ENCODE measurements at regions of chr7 and their contacts with region 1.

Region 1: GRCh38 chr7:92621026-92621540 is 30.9 kb upstream of the FAM133B start:
- DNase-seq: peak; percentile 55 to 91 (median 72)
- ATAC-seq: peak; percentile 92
- H3K4me3 ChIP-seq: no peak overlapping the region
- H3K4me3 Mint-ChIP-seq: peak overlapping the region; percentile 1
- H3K27ac ChIP-seq: peak overlapping the region in 1 of 2 donors; percentile 25
- H3K27ac Mint-ChIP-seq: peak overlapping the region; percentile 18
- H3K4me1 ChIP-seq: peaks cover 8% of the 10 kb centered on the region
- H3K4me1 Mint-ChIP-seq: peaks cover 18% of the 10 kb centered on the region
- H3K27me3 ChIP-seq: no peaks in the 10 kb centered on the region
- H3K27me3 Mint-ChIP-seq: no peaks in the 10 kb centered on the region
- CTCF ChIP-seq: peak; percentile 85

Region 2: GRCh38 chr7:92633211-92633906 is 12.3 kb after region 1 on chr7:
- CTCF ChIA-PET with region 1: interaction called, 13 read pairs
- POLR2A ChIA-PET with region 1: no interaction called
- intact Hi-C with region 1: no loop called
- DNase-seq: peak in 5 of 14 experiments; percentile 7 to 72 (median 66)
- ATAC-seq: peak; percentile 56
- H3K4me3 ChIP-seq: no peak overlapping the region
- H3K4me3 Mint-ChIP-seq: no peak overlapping the region
- H3K27ac ChIP-seq: no peak overlapping the region
- H3K27ac Mint-ChIP-seq: no peak overlapping the region
- H3K4me1 ChIP-seq: no peaks in the 10 kb centered on the region
- H3K4me1 Mint-ChIP-seq: peaks cover 37% of the 10 kb centered on the region
- H3K27me3 ChIP-seq: no peaks in the 10 kb centered on the region
- H3K27me3 Mint-ChIP-seq: no peaks in the 10 kb centered on the region
- CTCF ChIP-seq: no peak

Region 3: DNA sequence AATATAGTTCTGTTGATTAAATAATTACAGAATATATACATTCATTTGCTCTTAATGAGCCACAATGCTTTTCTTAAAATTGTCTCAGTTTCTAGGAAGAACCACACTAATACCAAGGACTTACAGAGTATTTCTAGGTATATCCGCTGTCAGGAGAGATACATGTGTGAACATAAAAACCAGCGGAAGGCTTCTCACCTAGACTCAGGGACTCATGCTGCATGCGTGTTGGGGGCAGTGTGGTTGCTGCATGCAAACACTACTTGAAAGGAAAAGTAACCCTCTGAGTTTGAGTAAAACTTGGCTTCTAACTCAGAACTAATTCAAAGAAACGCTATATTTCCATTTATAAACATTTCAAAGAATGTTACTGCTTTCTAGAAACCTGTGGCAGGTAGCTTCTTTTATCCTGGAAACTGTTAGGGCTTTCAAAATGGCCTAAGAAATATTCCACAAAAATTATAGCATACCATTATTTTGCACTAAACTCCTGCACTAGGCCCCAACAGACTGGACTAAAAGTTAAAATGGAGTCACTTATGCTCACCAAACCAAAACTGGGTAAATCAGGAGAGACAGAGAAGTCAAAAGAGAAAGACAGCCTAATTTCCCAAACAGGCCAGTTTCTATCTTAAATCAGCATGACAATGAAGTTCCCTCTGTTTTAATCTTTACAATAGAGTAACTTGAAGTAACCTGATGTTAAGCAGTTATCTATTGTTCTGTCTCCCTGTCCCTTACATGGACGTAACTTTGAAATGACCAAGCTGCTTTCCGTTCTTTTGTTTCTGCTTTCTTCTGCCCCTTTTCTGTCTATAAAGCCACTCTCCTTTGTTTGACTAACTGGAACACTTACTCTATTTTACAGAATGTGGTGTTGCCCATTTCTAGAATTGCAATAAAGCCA is 64.3 kb after region 1 on chr7:
- CTCF ChIA-PET with region 1: interaction called, 6 read pairs
- POLR2A ChIA-PET with region 1: no interaction called
- intact Hi-C with region 1: loop called (anchors 2 to 5 kb)
- DNase-seq: peak; percentile 6 to 86 (median 25)
- ATAC-seq: peak; percentile 89
- H3K4me3 ChIP-seq: no peak overlapping the region
- H3K4me3 Mint-ChIP-seq: peak overlapping the region; percentile 2
- H3K27ac ChIP-seq: peak overlapping the region; percentile 18 to 24
- H3K27ac Mint-ChIP-seq: peak overlapping the region; percentile 62
- H3K4me1 ChIP-seq: peaks cover 40% of the 10 kb centered on the region
- H3K4me1 Mint-ChIP-seq: peaks cover 61% of the 10 kb centered on the region
- H3K27me3 ChIP-seq: no peaks in the 10 kb centered on the region
- H3K27me3 Mint-ChIP-seq: no peaks in the 10 kb centered on the region
- CTCF ChIP-seq: no peak

Region 4: GRCh38 chr7:92691578-92691977 is 70.5 kb after region 1 on chr7:
- CTCF ChIA-PET with region 1: interaction called, 6 read pairs
- POLR2A ChIA-PET with region 1: no interaction called
- intact Hi-C with region 1: loop called (anchors 2 to 5 kb)
- DNase-seq: peak in 4 of 14 experiments; percentile 26 to 74 (median 68)
- ATAC-seq: peak; percentile 90
- H3K4me3 ChIP-seq: no peak overlapping the region
- H3K4me3 Mint-ChIP-seq: no peak overlapping the region
- H3K27ac ChIP-seq: no peak overlapping the region
- H3K27ac Mint-ChIP-seq: no peak overlapping the region
- H3K4me1 ChIP-seq: no peaks in the 10 kb centered on the region
- H3K4me1 Mint-ChIP-seq: peaks cover 17% of the 10 kb centered on the region
- H3K27me3 ChIP-seq: no peaks in the 10 kb centered on the region
- H3K27me3 Mint-ChIP-seq: no peaks in the 10 kb centered on the region
- CTCF ChIP-seq: peak; percentile 67

Region 5: DNA sequence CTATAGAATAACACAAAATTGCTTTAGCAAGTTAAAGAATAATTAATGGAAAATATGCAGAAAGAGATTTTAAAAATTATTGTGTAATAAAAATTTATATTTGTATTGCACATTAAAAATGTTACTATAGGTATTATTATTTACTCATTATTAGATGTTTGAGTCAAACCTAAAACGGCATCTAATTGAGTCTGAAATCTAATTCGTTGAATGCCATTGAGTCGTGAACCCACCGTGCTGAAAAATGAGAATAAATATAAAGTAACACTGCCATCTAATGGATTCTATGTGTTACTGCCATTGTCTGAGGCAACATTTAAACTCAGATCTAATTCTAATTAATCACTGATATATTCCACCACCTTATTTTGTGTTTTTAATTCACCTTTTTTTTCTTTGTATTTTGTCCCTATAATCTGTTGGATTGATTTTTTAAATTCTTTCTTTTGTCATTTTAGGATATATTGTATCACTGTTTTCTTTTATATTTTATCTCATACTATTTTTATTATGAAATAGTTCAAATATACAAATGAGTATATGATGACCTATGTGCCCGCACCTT is 434.5 kb after region 1 on chr7:
- CTCF ChIA-PET with region 1: interaction called, 5 read pairs
- POLR2A ChIA-PET with region 1: no interaction called
- intact Hi-C with region 1: loop called (anchors 1 kb)
- DNase-seq: peak in 4 of 14 experiments; percentile 7 to 66 (median 62)
- ATAC-seq: peak; percentile 76
- H3K4me3 ChIP-seq: no peak overlapping the region
- H3K4me3 Mint-ChIP-seq: no peak overlapping the region
- H3K27ac ChIP-seq: no peak overlapping the region
- H3K27ac Mint-ChIP-seq: no peak overlapping the region
- H3K4me1 ChIP-seq: no peaks in the 10 kb centered on the region
- H3K4me1 Mint-ChIP-seq: no peaks in the 10 kb centered on the region
- H3K27me3 ChIP-seq: peaks cover 0 to 5% of the 10 kb centered on the region in 2 experiments
- H3K27me3 Mint-ChIP-seq: no peaks in the 10 kb centered on the region
- CTCF ChIP-seq: peak; percentile 93

Measured in CD4-positive, alpha-beta T cell (primary cell).